GM10248 (cell line): ENCODE measurements at regions of chr17 and their contacts with region 1.

Region 1: GRCh38 chr17:44864866-44865660 is 17.4 kb downstream of the HIGD1B start:
- DNase-seq: peak; percentile 80
- CTCF ChIP-seq: peak; percentile 77

Region 2: DNA sequence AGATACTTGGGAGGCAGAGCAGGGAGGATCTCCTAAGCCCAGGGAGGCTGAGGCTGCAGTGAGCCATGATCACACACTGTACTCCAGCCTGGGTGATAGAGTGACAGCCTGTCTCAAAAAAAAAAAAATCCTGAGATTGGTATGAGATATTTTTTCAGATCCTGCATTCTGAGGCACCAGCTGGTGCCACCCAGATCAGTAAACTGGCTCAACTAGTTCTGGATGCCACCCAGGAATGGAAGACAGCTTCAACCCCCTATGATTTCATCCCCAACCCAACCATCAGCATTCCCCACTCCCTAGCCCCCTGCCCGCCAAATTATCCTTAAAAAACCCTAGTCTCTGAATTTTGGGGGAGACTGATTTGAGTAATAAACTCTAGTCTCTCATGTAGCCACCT is 27.8 kb before region 1 on chr17:
- CTCF ChIA-PET with region 1: interaction called, 12 read pairs
- POLR2A ChIA-PET with region 1: no interaction called
- DNase-seq: no peak
- CTCF ChIP-seq: no peak

Region 3: GRCh38 chr17:44844390-44844830 is 20.7 kb before region 1 on chr17:
- CTCF ChIA-PET with region 1: interaction called, 12 read pairs
- POLR2A ChIA-PET with region 1: no interaction called
- DNase-seq: no peak
- CTCF ChIP-seq: no peak

Region 4: GRCh38 chr17:44878627-44879221 is 13.7 kb after region 1 on chr17:
- CTCF ChIA-PET with region 1: interaction called, 72 read pairs
- POLR2A ChIA-PET with region 1: interaction called, 4 read pairs
- DNase-seq: peak; percentile 36
- CTCF ChIP-seq: peak; percentile 48

Region 5: GRCh38 chr17:44887971-44888954 is 23.2 kb after region 1 on chr17:
- CTCF ChIA-PET with region 1: interaction called, 23 read pairs
- POLR2A ChIA-PET with region 1: no interaction called
- DNase-seq: no peak
- CTCF ChIP-seq: no peak

Region 6: GRCh38 chr17:45413498-45413923 is 548.4 kb after region 1 on chr17:
- CTCF ChIA-PET with region 1: no interaction called
- POLR2A ChIA-PET with region 1: no interaction called
- DNase-seq: peak; percentile 80
- CTCF ChIP-seq: no peak